OCI-LY7 (cell line): ENCODE measurements at regions of chr16 and their contacts with region 1.

Region 1: GRCh38 chr16:85448557-85449197 is 164.4 kb upstream of the GSE1 start:
- DNase-seq: peak; percentile 87
- H3K4me3 ChIP-seq: peak overlapping the region; percentile 18
- H3K27ac ChIP-seq: peak overlapping the region; percentile 86
- H3K4me1 ChIP-seq: peaks cover 61% of the 10 kb centered on the region
- CTCF ChIP-seq: no peak

Region 2: DNA sequence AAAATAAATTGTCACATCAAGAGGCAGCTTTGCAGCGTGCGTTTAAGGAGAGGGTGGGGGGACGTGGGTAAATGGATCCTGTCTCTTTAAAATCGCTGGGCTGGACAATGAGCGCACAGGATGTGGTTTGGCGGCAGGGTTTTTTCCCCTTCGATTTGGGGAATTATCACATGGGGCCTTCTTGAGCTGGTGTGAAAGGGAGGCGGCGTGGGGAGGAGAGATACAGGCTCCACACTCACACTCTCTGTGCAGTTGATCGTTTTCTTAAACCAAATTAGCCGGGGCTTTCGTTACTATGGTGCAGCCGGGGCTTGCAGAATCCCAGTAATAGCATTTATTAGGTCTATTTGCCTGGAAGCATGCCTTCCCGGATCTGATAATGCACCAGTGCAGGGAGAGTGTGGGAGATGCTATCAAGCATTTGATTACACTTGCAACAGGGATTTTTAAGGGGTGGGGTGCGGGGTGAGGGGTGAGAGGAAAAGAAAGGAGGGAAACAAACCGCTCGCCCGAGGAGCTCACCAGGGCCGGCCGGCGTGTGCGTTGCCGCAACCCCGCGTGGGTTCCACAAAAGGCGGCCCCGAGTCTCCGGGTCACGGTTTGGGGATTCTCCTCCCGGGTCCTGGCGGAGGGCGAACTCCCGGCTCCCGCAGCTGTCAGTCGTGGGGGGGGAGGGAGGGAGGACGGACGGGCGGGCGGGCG is 105.6 kb after region 1 on chr16:
- CTCF ChIA-PET with region 1: interaction called, 5 read pairs
- POLR2A ChIA-PET with region 1: interaction called, 7 read pairs
- intact Hi-C with region 1: loop called (anchors 5 kb)
- DNase-seq: peak; percentile 88
- H3K4me3 ChIP-seq: peak overlapping the region; percentile 74
- H3K27ac ChIP-seq: peak overlapping the region; percentile 84
- H3K4me1 ChIP-seq: peaks cover 37% of the 10 kb centered on the region
- CTCF ChIP-seq: no peak

Region 3: GRCh38 chr16:85615852-85616606 is 167.4 kb after region 1 on chr16:
- CTCF ChIA-PET with region 1: interaction called, 16 read pairs
- POLR2A ChIA-PET with region 1: interaction called, 5 read pairs
- intact Hi-C with region 1: no loop called
- DNase-seq: peak; percentile 94
- H3K4me3 ChIP-seq: peak overlapping the region; percentile 76
- H3K27ac ChIP-seq: peak overlapping the region; percentile 86
- H3K4me1 ChIP-seq: peaks cover 50% of the 10 kb centered on the region
- CTCF ChIP-seq: peak; percentile 97

Region 4: DNA sequence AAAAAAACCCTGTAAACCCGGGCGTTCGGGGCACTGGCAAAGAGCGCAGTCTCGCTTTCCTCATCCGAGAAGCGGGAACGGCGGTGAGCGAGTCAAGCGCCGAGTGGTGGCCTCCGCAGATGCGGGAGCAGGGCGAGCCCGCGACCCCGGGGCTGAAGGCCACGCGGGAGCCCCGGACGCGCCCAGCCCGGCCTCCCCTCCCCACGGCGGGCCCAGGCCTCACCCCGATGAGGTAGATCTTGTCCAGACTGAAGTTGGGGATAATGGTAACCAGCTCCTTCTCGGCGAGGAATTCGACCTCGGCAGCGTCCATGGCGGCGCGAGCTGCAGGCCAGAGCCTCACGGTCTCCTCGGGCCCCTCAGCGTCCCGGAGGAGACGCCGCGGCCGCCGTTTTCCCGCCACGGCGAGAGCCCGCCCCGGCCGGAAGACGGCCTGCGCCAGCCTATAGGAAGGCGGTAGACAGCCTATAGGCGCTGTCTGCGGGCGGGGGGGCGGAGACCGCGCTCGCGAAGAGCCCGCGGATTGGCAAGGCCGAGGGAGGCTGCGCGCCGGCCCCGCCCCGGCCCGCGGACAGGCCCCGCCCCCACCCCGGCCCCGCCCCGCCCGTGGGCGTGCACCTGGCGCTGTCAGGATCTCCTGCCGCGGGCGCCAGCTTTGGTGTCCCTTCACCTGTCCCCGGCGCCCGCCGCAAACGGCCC is 240.1 kb after region 1 on chr16 and contains the start of gene GINS2:
- CTCF ChIA-PET with region 1: no interaction called
- POLR2A ChIA-PET with region 1: no interaction called
- intact Hi-C with region 1: loop called (anchors 1 kb)
- DNase-seq: peak; percentile 97
- H3K4me3 ChIP-seq: peak within 1 kb of the TSS; percentile 87
- H3K27ac ChIP-seq: peak within 1 kb of the TSS; percentile 90
- H3K4me1 ChIP-seq: peaks cover 50% of the 10 kb centered on the region
- CTCF ChIP-seq: no peak
- total RNA-seq, gene GINS2: 74.3 and 80.9 TPM in 2 replicates